H1 (cell line): ENCODE measurements at regions of chr14 and their contacts with region 1.

Region 1: DNA sequence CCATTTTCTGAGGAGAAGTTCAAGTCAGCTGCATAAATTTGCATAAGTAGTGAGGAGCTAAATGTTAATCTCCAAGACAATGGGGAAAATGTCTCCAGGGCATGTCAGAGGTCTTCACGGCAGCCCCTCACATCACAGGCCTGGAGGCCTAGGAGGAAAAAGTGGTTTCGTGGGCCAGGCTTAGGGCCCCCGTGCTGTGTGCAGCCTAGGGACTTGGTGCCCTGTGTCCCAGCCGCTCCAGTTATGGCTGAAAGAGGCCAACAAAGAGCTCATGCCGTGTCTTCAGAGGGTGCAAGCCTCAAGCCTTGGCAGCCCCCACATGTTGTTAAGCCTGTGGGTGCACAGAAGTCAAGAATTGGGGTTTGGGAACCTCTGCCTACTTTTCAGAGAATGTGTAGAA is 41.9 kb upstream of the RD3L start:
- DNase-seq: no peak
- H3K4me3 ChIP-seq: no peak overlapping the region
- H3K27ac ChIP-seq: no peak overlapping the region
- H3K4me1 ChIP-seq: no peaks in the 10 kb centered on the region
- H3K27me3 ChIP-seq: no peaks in the 10 kb centered on the region
- CTCF ChIP-seq: no peak
- EP300 ChIP-seq: no peak
- POLR2A ChIP-seq: no peak
- RAD21 ChIP-seq: no peak

Region 2: DNA sequence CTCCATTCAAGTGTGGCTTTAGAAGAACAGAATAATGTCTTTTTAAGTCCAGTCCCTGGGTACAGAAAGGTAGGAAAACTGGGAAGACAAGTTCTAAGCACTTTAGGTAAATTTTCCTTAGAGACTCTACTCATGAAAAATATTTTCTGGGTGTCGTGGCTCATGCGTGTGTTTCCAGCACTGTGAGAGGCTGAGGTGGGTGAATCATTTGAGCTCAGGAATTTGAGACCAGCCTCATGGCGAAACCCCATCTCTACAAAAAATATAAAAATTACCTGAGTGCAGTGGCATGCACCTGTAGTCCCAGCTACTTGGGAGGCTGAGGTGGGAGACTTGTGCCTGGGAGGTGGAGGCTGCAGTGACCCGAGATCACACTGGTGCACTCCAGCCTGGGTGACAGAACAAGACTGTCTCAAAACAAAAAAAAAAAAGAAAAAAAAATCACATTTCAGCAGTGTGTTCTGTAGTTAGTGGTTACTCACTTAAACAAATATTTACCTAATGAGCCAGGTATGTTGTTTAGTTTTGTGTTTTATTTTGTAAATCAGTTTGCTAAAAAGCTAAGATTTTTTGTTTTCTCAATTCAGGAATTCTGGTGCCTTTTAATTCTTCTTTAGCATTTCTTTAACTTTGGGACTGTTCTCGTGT is 10.5 kb after region 1 on chr14:
- CTCF ChIA-PET with region 1: interaction called, 21 read pairs
- POLR2A ChIA-PET with region 1: no interaction called
- DNase-seq: no peak
- H3K4me3 ChIP-seq: no peak overlapping the region
- H3K27ac ChIP-seq: no peak overlapping the region
- H3K4me1 ChIP-seq: no peaks in the 10 kb centered on the region
- H3K27me3 ChIP-seq: no peaks in the 10 kb centered on the region; a peak in 1 of 7 replicates
- CTCF ChIP-seq: no peak
- EP300 ChIP-seq: no peak
- POLR2A ChIP-seq: no peak
- RAD21 ChIP-seq: no peak

Region 3: DNA sequence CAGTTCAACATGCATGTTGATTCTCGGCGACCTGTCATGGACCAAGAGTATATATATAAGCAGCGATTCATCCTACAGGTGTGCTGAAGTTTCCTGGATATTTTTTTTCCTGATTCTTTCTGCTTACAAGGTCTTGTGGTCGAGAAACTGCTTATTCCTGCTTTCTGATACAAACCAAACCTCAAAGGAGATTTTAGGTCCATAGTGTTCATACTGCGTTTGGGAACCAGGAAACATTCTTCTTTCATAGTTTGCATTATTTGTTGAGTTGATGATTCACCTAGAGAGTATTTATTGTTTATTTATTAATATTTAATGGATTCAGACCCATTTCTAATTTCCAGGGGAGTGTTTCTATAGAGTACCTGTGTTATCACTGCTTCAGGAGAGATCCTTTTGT is 30.6 kb after region 1 on chr14:
- CTCF ChIA-PET with region 1: no interaction called
- POLR2A ChIA-PET with region 1: no interaction called
- DNase-seq: no peak
- H3K4me3 ChIP-seq: no peak overlapping the region
- H3K27ac ChIP-seq: no peak overlapping the region
- H3K4me1 ChIP-seq: no peaks in the 10 kb centered on the region
- H3K27me3 ChIP-seq: no peaks in the 10 kb centered on the region
- CTCF ChIP-seq: no peak
- EP300 ChIP-seq: no peak
- POLR2A ChIP-seq: no peak
- RAD21 ChIP-seq: no peak